GM13976 (cell line): ENCODE measurements at regions of chr1 and their contacts with region 1.

Region 1: DNA sequence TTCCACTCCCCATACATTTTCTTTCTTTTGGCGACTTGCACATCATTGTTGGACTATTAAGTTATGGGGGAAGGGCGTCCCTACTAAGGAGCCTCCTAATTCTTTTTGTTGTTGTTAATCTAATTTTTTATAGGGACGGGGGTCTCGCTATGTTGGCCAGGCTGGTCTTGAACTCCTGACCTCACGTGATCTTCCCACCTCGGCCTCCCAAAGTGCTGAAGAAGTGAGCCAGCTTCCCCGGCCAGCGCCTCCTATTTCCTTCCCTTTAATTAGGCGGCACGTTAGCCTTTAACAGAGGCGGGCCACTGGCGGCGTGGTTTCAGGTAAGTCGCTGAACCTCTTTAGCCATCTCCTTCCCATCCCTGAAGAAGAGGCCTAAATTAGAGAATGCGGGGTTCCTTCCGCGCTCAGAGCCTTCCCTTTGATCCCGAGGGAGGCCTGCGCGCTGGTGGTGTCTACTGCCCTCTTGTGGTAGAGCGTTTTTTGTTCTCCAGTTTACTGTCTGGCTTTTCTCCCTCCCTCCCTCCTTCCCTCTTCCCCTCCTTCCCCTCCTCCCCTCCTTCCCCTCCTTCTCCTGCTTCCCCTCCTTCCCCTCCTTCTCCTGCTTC is 38.1 kb downstream of the TNFRSF9 start:
- DNase-seq: peak; percentile 78
- CTCF ChIP-seq: peak; percentile 80

Region 2: GRCh38 chr1:7616076-7616832 is 286.3 kb before region 1 on chr1:
- in situ Hi-C with region 1: no loop called
- DNase-seq: peak; percentile 67
- CTCF ChIP-seq: no peak

Region 3: DNA sequence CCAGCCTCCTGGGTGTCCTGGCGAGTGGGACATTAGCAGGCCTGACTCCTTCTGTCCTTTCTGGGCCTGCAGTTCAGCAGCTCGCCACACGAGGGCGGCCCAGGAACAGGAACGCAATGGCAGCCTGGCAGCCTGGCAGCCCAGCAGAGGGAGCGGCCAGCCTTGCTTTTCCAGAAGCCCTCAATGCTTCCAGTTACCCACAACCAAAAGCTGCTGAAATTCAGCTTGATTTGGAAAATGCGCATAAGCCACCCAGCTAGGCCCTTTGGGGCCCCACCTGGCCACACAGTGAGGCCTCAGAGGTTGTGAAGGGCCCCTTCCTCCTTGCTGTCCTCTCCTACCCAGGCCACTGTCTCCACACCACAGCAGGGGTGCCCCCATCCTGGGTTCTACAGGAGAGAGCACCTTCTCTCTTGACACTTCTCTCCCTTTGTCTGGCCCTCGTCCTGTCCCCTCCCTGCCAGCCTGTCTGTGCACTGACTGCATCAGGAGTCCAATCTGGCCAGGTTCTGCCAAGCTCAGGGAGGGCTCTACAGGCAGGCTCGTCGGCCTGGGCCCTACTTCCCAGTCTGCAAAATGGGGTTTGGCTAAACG is 234.9 kb before region 1 on chr1:
- in situ Hi-C with region 1: loop called (anchors 10 kb)
- DNase-seq: peak; percentile 91
- CTCF ChIP-seq: peak; percentile 100